ENCODE measurements at regions of chr17 and their contacts with region 1.

Region 1: GRCh38 chr17:34199932-34200534 is 55.1 kb upstream of the CCL2 start:
- DNase-seq: peak; percentile 52 to 82 (median 62)
- H3K4me3 ChIP-seq: no peak overlapping the region
- H3K27ac ChIP-seq: no peak overlapping the region
- H3K4me1 ChIP-seq: no peaks in the 10 kb centered on the region
- H3K27me3 ChIP-seq: no peaks in the 10 kb centered on the region
- CTCF ChIP-seq: peak; percentile 94 to 98 (median 98)
- EP300 ChIP-seq: no peak
- POLR2A ChIP-seq: peak; percentile 16

Region 2: GRCh38 chr17:34254651-34255380 is 54.8 kb after region 1 on chr17 and contains the start of gene CCL2:
- intact Hi-C with region 1: no loop called
- DNase-seq: peak; percentile 41 to 75 (median 58)
- H3K4me3 ChIP-seq: peak within 1 kb of the TSS; percentile 15
- H3K27ac ChIP-seq: peak within 1 kb of the TSS in 1 of 2 donors; percentile 32
- H3K4me1 ChIP-seq: peaks cover 15% of the 10 kb centered on the region
- H3K27me3 ChIP-seq: no peaks in the 10 kb centered on the region
- CTCF ChIP-seq: no peak
- EP300 ChIP-seq: no peak
- POLR2A ChIP-seq: no peak
- total RNA-seq, gene CCL2: 5.0 to 156 (median 25.3) TPM

Region 3: DNA sequence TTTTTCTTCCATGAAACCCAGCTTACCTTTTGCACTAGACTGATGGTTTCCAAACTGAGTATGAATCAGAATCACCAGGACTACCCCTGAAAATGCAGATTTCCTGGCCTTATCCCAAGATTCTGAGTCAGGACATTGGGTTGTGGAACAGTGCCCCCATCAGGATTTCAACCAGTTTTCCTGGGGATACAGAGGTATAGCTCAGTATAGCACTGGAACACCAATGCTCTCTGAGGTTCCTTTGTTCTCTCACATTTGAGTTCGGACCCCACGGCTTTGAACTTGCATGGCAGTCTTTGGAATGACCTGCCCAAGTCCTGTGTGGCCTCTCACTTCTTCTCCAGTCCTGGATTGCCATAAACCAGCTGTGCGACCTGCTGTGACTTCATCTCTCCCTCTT is 106.4 kb after region 1 on chr17:
- intact Hi-C with region 1: loop called in 1 of 4 experiments (anchors 10 kb)
- DNase-seq: peak in 1 of 5 donors; percentile 35
- H3K4me3 ChIP-seq: no peak overlapping the region
- H3K27ac ChIP-seq: no peak overlapping the region
- H3K4me1 ChIP-seq: peaks cover 2% of the 10 kb centered on the region
- H3K27me3 ChIP-seq: no peaks in the 10 kb centered on the region
- CTCF ChIP-seq: no peak
- EP300 ChIP-seq: no peak
- POLR2A ChIP-seq: no peak

Region 4: DNA sequence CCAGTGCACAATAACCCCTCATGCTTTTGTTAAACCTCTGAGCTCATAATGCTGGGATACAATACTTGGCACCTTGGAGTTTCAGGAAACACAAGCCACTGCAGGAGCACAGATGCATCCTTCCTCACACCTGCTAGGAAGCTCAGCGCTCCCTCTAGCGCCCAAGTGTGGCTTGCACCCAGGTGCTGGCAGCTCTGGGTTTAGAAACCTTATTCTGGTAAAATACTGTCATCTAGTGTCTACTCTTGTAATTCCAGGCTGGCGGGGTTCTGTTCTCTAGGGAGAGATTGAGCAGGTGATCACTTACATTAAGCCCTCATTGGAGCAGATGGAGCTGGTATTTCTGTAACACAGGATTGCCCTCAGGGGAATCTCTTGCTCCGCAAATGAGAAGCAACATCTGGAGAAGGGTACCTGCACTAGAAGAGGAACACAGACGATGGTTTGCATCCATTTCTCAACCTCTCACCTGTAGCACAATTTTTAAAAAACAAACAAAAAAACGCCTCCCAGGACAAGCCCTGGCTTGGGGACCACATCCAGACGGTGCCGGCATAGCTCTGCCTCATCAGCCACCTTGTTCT is 161.5 kb after region 1 on chr17:
- intact Hi-C with region 1: loop called (anchors 2 to 10 kb)
- DNase-seq: peak; percentile 54 to 85 (median 80)
- H3K4me3 ChIP-seq: no peak overlapping the region
- H3K27ac ChIP-seq: no peak overlapping the region
- H3K4me1 ChIP-seq: no peaks in the 10 kb centered on the region
- H3K27me3 ChIP-seq: no peaks in the 10 kb centered on the region
- CTCF ChIP-seq: peak; percentile 39 to 92 (median 83)
- EP300 ChIP-seq: no peak
- POLR2A ChIP-seq: no peak

Measured in ovary (tissue), 10 donors.